A673 (cell line): ENCODE measurements at regions of chr14 and their contacts with region 1.

Region 1: GRCh38 chr14:94423453-94424056 is 29.0 kb downstream of the SERPINA11 start:
- DNase-seq: peak; percentile 77
- H3K4me3 ChIP-seq: no peak overlapping the region
- H3K27ac ChIP-seq: no peak overlapping the region
- H3K4me1 ChIP-seq: no peaks in the 10 kb centered on the region
- H3K27me3 ChIP-seq: peaks cover 47% of the 10 kb centered on the region
- CTCF ChIP-seq: peak; percentile 89

Region 2: GRCh38 chr14:94460631-94461416 is 37.3 kb after region 1 on chr14:
- CTCF ChIA-PET with region 1: no interaction called
- POLR2A ChIA-PET with region 1: no interaction called
- intact Hi-C with region 1: no loop called
- DNase-seq: no peak
- H3K4me3 ChIP-seq: no peak overlapping the region
- H3K27ac ChIP-seq: no peak overlapping the region
- H3K4me1 ChIP-seq: no peaks in the 10 kb centered on the region
- H3K27me3 ChIP-seq: peaks cover 6% of the 10 kb centered on the region
- CTCF ChIP-seq: no peak

Region 3: DNA sequence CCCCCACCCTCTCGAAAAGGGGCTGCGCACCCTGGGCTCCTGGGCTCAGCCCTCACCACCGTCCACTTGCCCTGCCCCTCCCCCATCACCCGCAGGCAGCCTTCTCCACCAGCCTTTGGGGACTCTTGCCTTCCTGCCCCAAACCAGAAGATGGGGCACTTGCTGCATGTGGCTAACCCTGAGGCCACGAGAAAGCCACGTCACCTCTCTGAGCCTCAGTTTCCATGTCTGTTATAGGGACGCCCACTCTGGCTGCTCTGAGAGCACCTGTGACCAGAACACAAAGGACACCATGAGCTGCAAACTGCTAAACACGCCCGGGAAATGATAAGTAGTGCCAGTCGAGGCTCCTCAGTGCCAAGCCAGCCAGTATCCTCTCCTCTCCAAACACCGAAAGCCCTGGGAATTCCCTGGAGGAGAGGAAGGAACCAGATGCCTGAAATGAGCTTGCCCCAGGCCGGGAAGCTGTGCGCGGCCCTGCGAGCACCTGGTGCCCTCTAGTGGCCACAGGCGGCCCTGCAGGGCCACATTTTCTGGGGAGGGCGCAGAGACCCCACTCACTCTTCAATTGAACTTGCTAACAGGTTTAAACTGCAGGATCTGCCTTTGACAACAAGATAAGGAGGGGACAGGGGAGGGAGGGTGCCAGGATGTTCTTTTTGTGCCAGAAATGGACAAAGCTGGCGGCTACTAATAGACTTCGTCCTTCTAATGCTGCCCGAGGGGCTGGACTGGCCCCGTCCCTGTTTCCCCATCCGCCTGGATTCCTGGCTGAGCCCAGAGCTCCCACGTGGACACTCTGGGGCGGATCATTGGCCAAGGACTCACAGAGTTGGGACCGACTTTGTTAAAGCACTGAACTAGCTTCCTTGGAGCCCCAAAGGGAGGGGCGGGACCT is 62.6 kb after region 1 on chr14:
- CTCF ChIA-PET with region 1: interaction called, 8 read pairs
- POLR2A ChIA-PET with region 1: no interaction called
- intact Hi-C with region 1: loop called (anchors 1 kb)
- DNase-seq: peak; percentile 61
- H3K4me3 ChIP-seq: no peak overlapping the region
- H3K27ac ChIP-seq: no peak overlapping the region
- H3K4me1 ChIP-seq: peaks cover 6% of the 10 kb centered on the region
- H3K27me3 ChIP-seq: peaks cover 4% of the 10 kb centered on the region
- CTCF ChIP-seq: peak; percentile 99